ENCODE measurements at regions of chr1 and their contacts with region 1.

Region 1: DNA sequence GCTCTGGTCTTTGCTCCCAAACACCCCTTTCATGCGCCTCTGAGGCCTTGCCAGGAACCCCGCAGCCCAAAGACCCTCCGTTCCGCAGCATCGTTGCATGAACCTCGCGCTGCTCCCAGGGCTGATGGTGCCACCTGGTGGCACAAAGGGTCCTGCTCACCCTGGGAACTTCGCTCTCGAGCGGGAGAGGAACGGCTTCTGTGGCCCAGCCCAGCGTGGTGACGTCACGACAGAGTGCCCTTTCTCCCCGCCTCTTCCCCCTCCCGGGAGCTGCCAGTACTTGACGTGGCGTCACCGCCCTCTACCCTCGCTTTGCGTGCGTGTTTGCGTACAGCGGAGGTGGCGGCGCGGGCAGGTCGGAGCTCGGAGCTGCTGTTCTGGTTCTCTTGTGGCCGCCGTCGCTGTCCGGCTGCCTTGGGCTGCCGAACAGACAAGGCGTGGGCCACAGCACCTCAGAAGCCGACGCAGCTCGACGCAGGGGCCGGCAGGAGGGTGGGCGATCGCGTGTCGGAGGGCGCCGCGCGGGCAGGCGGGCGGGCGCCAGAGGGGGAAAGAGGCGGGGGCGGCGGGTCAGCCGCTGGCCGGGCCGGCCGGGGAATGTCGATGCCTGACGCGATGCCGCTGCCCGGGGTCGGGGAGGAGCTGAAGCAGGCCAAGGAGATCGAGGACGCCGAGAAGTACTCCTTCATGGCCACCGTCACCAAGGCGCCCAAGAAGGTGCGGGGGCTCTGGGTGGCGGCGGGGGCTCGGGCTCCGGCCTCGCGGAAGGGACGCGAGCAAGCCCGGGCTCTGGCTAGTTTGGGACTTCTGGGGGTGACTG is at the start of gene AHCYL1:
- DNase-seq: peak; percentile 98 to 99 (median 99)
- ATAC-seq: peak; percentile 99
- H3K4me3 ChIP-seq: peak within 1 kb of the TSS; percentile 75 to 84
- H3K4me3 Mint-ChIP-seq: peak within 1 kb of the TSS; percentile 99
- H3K27ac ChIP-seq: peak within 1 kb of the TSS; percentile 72 to 84
- H3K27ac Mint-ChIP-seq: peak within 1 kb of the TSS; percentile 97
- H3K4me1 ChIP-seq: peaks cover 20% of the 10 kb centered on the region
- H3K4me1 Mint-ChIP-seq: peaks cover 45% of the 10 kb centered on the region
- H3K27me3 ChIP-seq: no peaks in the 10 kb centered on the region
- H3K27me3 Mint-ChIP-seq: no peaks in the 10 kb centered on the region
- CTCF ChIP-seq: peak; percentile 86
- total RNA-seq, gene AHCYL1: 5.3 to 5.5 TPM

Region 2: DNA sequence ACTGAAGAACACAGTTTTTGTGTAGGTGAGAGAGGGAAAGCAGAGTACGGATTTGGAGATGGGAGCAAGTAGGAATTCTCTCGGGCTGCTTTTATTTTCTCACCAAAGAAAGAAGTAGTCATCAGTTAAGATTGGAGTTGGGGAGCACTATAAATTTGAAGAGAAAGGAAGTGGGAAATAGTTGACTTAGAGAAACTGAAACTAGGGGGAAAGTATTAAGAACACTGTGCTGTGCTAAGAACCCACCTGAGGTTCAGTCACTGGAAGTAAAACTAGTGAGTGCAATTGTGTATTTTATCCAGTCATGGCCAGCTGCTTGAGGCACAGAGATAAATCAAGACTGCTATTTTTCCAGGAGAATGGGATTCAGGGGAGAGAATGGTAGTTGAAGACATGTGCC is 1058.7 kb before region 1 on chr1:
- CTCF ChIA-PET with region 1: no interaction called
- POLR2A ChIA-PET with region 1: no interaction called
- intact Hi-C with region 1: no loop called
- DNase-seq: no peak
- ATAC-seq: no peak
- H3K4me3 ChIP-seq: no peak overlapping the region
- H3K4me3 Mint-ChIP-seq: no peak overlapping the region
- H3K27ac ChIP-seq: no peak overlapping the region
- H3K27ac Mint-ChIP-seq: no peak overlapping the region
- H3K4me1 ChIP-seq: no peaks in the 10 kb centered on the region
- H3K4me1 Mint-ChIP-seq: no peaks in the 10 kb centered on the region
- H3K27me3 ChIP-seq: no peaks in the 10 kb centered on the region
- H3K27me3 Mint-ChIP-seq: no peaks in the 10 kb centered on the region
- CTCF ChIP-seq: no peak

Region 3: DNA sequence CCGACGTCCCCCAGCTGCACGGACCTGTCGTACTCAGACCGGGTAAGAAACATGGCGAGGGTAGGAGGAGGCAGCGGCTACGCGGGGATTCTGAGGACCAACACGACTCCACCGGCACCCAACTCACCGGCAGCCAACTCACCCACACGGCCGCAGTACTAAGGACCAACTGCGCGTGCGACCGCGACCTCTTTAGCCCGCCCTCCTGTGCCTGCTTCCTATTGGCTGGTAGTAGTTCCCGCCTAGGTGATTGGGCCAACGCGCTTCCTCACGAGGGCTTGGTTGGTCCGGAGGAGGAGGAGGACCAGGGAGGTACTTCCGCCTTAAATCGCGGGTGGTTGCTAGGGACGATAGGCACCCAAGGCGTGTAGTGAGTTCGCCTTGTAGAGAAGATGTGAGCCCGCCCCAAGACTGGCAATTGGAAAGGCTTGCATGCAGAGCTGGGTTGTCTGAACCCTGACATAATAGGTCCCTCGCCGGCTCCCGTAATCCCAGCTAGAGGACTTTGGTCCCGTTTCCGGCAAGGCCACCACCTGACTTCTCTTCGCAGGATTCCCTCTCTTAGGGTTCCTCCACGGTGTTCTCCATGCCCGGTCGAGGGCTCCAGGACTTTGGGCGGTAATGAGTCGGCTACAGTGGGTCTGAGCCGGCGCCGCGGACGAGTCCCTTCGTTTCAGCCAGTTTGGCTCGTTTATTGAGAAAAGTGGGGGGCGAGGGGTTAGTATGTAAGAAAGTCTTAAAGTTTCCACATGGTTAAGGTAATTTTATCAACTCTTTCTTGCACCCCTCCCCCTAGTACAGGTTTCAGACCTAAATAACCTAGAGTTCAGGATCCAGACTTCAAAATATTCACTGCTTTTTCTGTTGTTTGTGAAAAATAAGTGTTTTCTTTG is 558.1 kb before region 1 on chr1 and contains the start of gene PSMA5:
- CTCF ChIA-PET with region 1: no interaction called
- POLR2A ChIA-PET with region 1: no interaction called
- intact Hi-C with region 1: loop called (anchors 5 to 10 kb)
- DNase-seq: peak; percentile 87 to 99 (median 93)
- ATAC-seq: peak; percentile 90
- H3K4me3 ChIP-seq: peak within 1 kb of the TSS; percentile 83 to 84
- H3K4me3 Mint-ChIP-seq: peak within 1 kb of the TSS; percentile 98
- H3K27ac ChIP-seq: peak within 1 kb of the TSS; percentile 80 to 90
- H3K27ac Mint-ChIP-seq: peak within 1 kb of the TSS; percentile 99
- H3K4me1 ChIP-seq: peaks cover 39% of the 10 kb centered on the region
- H3K4me1 Mint-ChIP-seq: peaks cover 39% of the 10 kb centered on the region
- H3K27me3 ChIP-seq: no peaks in the 10 kb centered on the region
- H3K27me3 Mint-ChIP-seq: no peaks in the 10 kb centered on the region
- CTCF ChIP-seq: no peak
- total RNA-seq, gene PSMA5: 30.9 to 32.6 TPM

Region 4: GRCh38 chr1:109620841-109621286 is 363.8 kb before region 1 on chr1:
- CTCF ChIA-PET with region 1: interaction called, 7 read pairs
- POLR2A ChIA-PET with region 1: no interaction called
- intact Hi-C with region 1: loop called in 1 of 2 experiments (anchors 1 kb)
- DNase-seq: peak; percentile 91 to 99 (median 97)
- ATAC-seq: peak; percentile 87
- H3K4me3 ChIP-seq: peak overlapping the region; percentile 90 to 92
- H3K4me3 Mint-ChIP-seq: peak overlapping the region; percentile 98
- H3K27ac ChIP-seq: peak overlapping the region; percentile 86 to 91
- H3K27ac Mint-ChIP-seq: peak overlapping the region; percentile 97
- H3K4me1 ChIP-seq: peaks cover 50% of the 10 kb centered on the region
- H3K4me1 Mint-ChIP-seq: peaks cover 64% of the 10 kb centered on the region
- H3K27me3 ChIP-seq: no peaks in the 10 kb centered on the region
- H3K27me3 Mint-ChIP-seq: no peaks in the 10 kb centered on the region
- CTCF ChIP-seq: no peak

Region 5: GRCh38 chr1:109739738-109740660 is 244.7 kb before region 1 on chr1:
- CTCF ChIA-PET with region 1: interaction called, 4 read pairs
- POLR2A ChIA-PET with region 1: no interaction called
- intact Hi-C with region 1: loop called in 1 of 2 experiments (anchors 1 kb)
- DNase-seq: peak; percentile 59 to 91 (median 82)
- ATAC-seq: peak; percentile 97
- H3K4me3 ChIP-seq: peak overlapping the region; percentile 76 to 82
- H3K4me3 Mint-ChIP-seq: peak overlapping the region; percentile 92
- H3K27ac ChIP-seq: peak overlapping the region; percentile 49 to 58
- H3K27ac Mint-ChIP-seq: peak overlapping the region; percentile 89
- H3K4me1 ChIP-seq: peaks cover 13% of the 10 kb centered on the region
- H3K4me1 Mint-ChIP-seq: peaks cover 15% of the 10 kb centered on the region
- H3K27me3 ChIP-seq: peaks cover 0 to 2% of the 10 kb centered on the region in 2 experiments
- H3K27me3 Mint-ChIP-seq: peaks cover 3% of the 10 kb centered on the region
- CTCF ChIP-seq: no peak

Region 6: DNA sequence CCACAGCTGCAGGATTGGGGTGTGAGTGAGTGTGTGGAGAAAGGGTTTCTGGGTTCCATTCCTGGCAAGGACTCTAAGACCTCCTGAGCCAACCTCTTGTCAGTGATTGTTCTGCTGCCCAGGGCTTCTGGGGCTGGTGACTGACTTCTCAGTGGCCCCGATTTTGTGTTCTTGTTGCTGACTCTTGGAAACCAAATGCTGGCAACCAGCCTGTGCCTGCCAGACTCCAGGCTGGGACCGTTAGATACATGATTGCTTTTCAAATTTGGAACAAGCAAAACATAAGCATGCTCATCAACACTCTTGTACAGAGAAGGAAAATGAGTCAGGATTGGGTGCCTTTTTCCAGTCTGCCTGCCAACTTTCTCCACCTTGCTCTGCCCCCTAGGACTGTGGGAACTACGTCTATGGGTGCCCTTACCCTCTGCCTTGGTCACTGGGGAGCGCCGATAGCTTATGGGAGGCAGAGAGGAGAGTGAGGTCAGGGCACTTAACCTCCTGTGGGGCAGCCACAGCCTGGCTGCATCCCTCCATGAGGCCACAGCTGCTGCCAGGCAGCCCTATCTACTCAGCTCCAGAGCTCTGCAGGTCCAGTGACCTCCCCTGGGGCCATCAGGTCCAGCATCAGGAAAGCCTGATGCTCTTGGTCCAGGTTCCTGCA is 181.6 kb before region 1 on chr1:
- CTCF ChIA-PET with region 1: interaction called, 15 read pairs
- POLR2A ChIA-PET with region 1: interaction called, 10 read pairs
- intact Hi-C with region 1: no loop called
- DNase-seq: no peak
- ATAC-seq: no peak
- H3K4me3 ChIP-seq: peak overlapping the region; percentile 10 to 28
- H3K4me3 Mint-ChIP-seq: peak overlapping the region; percentile 73
- H3K27ac ChIP-seq: peak overlapping the region; percentile 1 to 55
- H3K27ac Mint-ChIP-seq: peak overlapping the region; percentile 85
- H3K4me1 ChIP-seq: peaks cover 62% of the 10 kb centered on the region
- H3K4me1 Mint-ChIP-seq: peaks cover 61% of the 10 kb centered on the region
- H3K27me3 ChIP-seq: no peaks in the 10 kb centered on the region
- H3K27me3 Mint-ChIP-seq: no peaks in the 10 kb centered on the region
- CTCF ChIP-seq: no peak

Region 7: DNA sequence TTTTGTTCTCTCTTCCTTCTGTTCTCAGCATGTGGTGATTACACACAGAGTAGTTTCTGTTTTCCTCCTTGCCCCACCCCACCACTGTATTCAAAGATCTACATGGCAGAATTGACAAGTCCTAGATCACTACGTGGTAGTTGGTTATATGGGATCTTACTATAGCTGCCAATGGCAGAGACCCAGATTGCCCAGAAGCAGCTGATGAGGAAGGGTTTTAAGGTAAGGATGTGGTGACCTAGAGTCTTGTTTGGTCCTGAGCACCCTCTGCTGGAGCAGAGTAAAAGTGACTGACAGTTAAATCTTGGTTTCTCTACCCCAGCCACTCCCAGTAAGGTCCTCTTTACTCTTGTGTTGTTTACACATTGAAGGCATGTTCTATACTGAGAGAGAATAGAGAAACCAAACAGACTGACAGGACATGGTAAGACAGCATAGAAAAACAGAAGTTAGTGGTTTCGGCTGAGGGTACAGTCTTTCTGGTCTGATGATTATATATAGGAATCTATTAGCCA is 26.9 kb after region 1 on chr1:
- CTCF ChIA-PET with region 1: interaction called, 12 read pairs
- POLR2A ChIA-PET with region 1: no interaction called
- intact Hi-C with region 1: no loop called
- DNase-seq: peak in 5 of 9 experiments; percentile 12 to 62 (median 30)
- ATAC-seq: peak; percentile 95
- H3K4me3 ChIP-seq: no peak overlapping the region
- H3K4me3 Mint-ChIP-seq: no peak overlapping the region
- H3K27ac ChIP-seq: no peak overlapping the region
- H3K27ac Mint-ChIP-seq: no peak overlapping the region
- H3K4me1 ChIP-seq: no peaks in the 10 kb centered on the region
- H3K4me1 Mint-ChIP-seq: peaks cover 2% of the 10 kb centered on the region
- H3K27me3 ChIP-seq: no peaks in the 10 kb centered on the region
- H3K27me3 Mint-ChIP-seq: no peaks in the 10 kb centered on the region
- CTCF ChIP-seq: peak; percentile 46